H1 (cell line): ENCODE measurements at regions of chr1 and their contacts with region 1.

Region 1: DNA sequence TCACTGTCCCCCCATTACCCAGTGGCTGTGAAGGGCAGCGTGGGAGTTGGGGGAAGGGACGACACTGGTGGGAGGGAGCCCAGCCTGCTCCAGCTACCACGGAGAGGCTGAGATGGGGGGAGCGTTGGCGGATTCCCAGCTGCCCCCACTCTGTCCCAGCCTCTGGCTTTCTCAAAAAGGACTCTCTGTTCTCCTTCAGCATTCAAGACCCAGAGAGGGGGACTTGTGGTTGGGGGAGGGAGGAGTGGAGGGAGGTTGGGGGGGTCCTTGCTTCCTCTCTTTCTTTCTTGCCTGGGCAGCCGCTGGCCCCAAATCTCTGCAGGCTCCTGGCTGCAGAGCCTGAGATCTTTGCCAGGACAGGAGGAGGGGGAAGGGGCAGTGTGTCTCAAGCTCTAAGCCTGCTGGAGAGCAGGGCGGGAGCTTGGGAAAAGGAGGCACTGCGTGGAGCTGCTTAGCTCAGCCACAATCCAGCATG is 2.2 kb downstream of the ATP1A2 start:
- DNase-seq: no peak
- H3K4me3 ChIP-seq: peak overlapping the region in 1 of 4 experiments; percentile 59; a peak in 3 of 8 replicates
- H3K27ac ChIP-seq: no peak overlapping the region
- H3K4me1 ChIP-seq: peaks cover 15 to 44% (median 32%) of the 10 kb centered on the region in 4 experiments
- H3K27me3 ChIP-seq: no peaks in the 10 kb centered on the region; a peak in 1 of 7 replicates
- CTCF ChIP-seq: no peak
- EP300 ChIP-seq: no peak
- POLR2A ChIP-seq: no peak
- RAD21 ChIP-seq: no peak

Region 2: DNA sequence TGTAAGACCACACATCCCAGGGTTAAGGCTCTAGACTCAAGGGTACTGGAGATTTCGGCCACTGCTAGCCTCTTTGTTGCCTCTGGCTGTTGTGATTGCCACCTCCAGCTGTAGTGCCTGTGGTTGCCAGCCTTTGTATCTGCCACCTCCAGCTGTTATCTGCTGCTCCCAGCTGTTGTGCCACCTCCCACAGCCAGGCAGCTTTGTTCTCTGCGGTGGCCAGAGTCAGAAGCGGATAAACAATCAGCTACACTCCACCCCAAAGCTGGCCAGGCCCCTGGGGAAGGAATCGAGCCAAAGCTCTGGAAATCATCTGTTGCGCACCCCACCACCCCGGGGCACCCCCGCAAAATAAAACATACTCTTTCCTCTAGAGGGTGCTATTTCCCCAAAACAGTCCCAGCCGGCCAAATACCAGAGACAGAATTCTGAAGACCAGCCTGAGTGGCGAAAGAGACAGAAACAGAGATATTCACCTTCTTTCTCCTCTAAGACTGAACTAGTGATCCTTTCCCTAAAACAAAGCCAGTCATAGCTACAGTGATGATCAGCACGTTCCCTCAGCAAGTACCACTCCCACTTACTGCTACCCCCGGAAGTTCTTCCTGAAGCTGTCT is 71.1 kb before region 1 on chr1:
- CTCF ChIA-PET with region 1: interaction called, 12 read pairs
- POLR2A ChIA-PET with region 1: no interaction called
- DNase-seq: peak in 1 of 2 experiments; percentile 76
- H3K4me3 ChIP-seq: peak overlapping the region in 1 of 4 experiments; percentile 14; a peak in 2 of 8 replicates
- H3K27ac ChIP-seq: no peak overlapping the region
- H3K4me1 ChIP-seq: peaks cover 10 to 24% (median 16%) of the 10 kb centered on the region in 4 experiments
- H3K27me3 ChIP-seq: no peaks in the 10 kb centered on the region; a peak in 1 of 7 replicates
- CTCF ChIP-seq: peak; percentile 45 to 76 (median 69)
- EP300 ChIP-seq: peak in 1 of 2 experiments; percentile 17; a peak in 2 of 3 replicates
- POLR2A ChIP-seq: no peak
- RAD21 ChIP-seq: peak; percentile 71 to 80

Region 3: GRCh38 chr1:160078512-160079195 is 39.1 kb before region 1 on chr1:
- CTCF ChIA-PET with region 1: interaction called, 13 read pairs
- POLR2A ChIA-PET with region 1: no interaction called
- DNase-seq: peak in 1 of 2 experiments; percentile 90
- H3K4me3 ChIP-seq: no peak overlapping the region
- H3K27ac ChIP-seq: no peak overlapping the region
- H3K4me1 ChIP-seq: no peaks in the 10 kb centered on the region
- H3K27me3 ChIP-seq: peaks cover 0 to 33% (median 20%) of the 10 kb centered on the region in 4 experiments; a peak in 6 of 7 replicates
- CTCF ChIP-seq: peak; percentile 91 to 95 (median 93)
- EP300 ChIP-seq: no peak
- POLR2A ChIP-seq: no peak
- RAD21 ChIP-seq: peak; percentile 75 to 84

Region 4: DNA sequence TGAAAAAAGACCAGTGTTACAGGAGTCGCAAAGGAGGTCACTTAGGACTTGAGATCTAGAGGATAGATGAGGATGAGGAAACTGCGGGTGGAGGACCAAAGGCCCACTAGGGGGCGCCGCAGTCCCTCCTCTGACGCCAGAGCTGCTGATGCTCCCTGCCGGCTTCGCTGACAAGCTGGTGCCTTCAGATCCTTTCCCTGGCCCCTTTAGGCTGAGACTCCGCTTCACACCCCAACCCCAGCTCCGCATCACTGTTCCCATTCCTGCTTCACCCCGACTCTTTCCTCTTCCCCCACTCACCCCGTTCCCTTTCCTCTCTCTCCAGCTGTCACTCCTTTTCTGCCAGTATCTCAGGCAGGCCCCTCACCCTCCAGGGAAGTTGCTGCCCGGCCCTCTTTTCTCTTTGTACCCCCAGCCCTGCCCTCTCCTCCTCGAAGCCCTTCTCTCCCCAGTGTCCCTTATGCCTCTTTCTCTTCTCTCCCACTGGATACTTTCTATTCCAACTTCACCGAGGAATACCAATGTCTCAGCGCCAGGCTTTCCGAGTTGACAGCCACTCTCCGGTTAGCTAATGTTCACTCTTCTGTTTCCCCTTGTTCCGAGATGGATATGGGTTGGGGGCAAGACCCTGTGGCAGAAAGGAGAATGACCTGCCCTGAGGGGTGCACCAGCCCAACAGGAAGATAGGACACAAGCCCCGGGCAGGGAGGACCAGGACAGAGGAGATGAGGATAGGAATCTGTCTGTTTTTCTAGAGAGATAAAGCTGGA is 31.9 kb before region 1 on chr1:
- CTCF ChIA-PET with region 1: interaction called, 12 read pairs
- POLR2A ChIA-PET with region 1: interaction called, 7 read pairs
- DNase-seq: peak; percentile 88 to 96
- H3K4me3 ChIP-seq: no peak overlapping the region
- H3K27ac ChIP-seq: no peak overlapping the region
- H3K4me1 ChIP-seq: peaks cover 0 to 5% (median 3%) of the 10 kb centered on the region in 4 experiments; a peak in 4 of 7 replicates
- H3K27me3 ChIP-seq: peaks cover 0 to 35% (median 27%) of the 10 kb centered on the region in 4 experiments; a peak in 6 of 7 replicates
- CTCF ChIP-seq: peak; percentile 91 to 99 (median 95)
- EP300 ChIP-seq: no peak
- POLR2A ChIP-seq: no peak
- RAD21 ChIP-seq: peak; percentile 83 to 88

Region 5: DNA sequence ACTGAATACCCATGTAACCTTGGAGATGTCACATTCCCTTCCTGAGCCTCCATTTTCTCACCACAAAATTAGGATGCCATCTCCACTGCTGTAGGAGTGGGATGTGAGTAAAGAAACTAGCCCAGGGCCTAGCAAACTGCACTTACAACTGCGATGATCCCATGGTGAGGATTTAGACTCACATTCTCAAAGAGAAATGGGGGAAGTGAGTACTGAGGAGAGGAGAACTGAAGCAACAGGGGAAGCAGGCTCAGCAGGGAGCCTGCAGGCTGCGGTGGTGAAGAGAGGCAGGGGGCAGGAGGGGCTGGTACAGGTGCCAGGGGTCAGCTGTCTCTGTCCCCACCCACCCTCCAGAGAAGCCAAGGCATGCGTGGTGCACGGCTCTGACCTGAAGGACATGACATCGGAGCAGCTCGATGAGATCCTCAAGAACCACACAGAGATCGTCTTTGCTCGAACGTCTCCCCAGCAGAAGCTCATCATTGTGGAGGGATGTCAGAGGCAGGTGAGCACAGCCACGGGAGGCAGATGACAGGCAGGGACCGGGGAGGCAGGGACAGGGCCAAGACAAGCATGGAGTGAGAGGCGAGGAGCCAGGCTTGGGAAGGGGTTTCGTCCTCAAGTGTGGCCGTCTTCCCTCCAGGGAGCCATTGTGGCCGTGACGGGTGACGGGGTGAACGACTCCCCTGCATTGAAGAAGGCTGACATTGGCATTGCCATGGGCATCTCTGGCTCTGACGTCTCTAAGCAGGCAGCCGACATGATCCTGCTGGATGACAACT is 17.2 kb after region 1 on chr1:
- CTCF ChIA-PET with region 1: interaction called, 141 read pairs
- POLR2A ChIA-PET with region 1: interaction called, 10 read pairs
- DNase-seq: no peak
- H3K4me3 ChIP-seq: no peak overlapping the region
- H3K27ac ChIP-seq: no peak overlapping the region
- H3K4me1 ChIP-seq: no peaks in the 10 kb centered on the region
- H3K27me3 ChIP-seq: no peaks in the 10 kb centered on the region
- CTCF ChIP-seq: no peak
- EP300 ChIP-seq: no peak
- POLR2A ChIP-seq: no peak
- RAD21 ChIP-seq: no peak

Region 6: GRCh38 chr1:160169553-160170399 is 52.0 kb after region 1 on chr1:
- CTCF ChIA-PET with region 1: interaction called, 19 read pairs
- POLR2A ChIA-PET with region 1: interaction called, 3 read pairs
- DNase-seq: peak; percentile 79 to 86
- H3K4me3 ChIP-seq: peak overlapping the region in 3 of 4 experiments; percentile 7 to 50 (median 13); a peak in 5 of 8 replicates
- H3K27ac ChIP-seq: peak overlapping the region; percentile 46; the same call in 1 of the 2 replicates
- H3K4me1 ChIP-seq: peaks cover 12 to 28% (median 22%) of the 10 kb centered on the region in 4 experiments; a peak in 6 of 7 replicates
- H3K27me3 ChIP-seq: peaks cover 0 to 2% (median under 1%) of the 10 kb centered on the region in 4 experiments; a peak in 2 of 7 replicates
- CTCF ChIP-seq: no peak
- EP300 ChIP-seq: peak in 1 of 2 experiments; percentile 96; a peak in 2 of 3 replicates
- POLR2A ChIP-seq: no peak
- RAD21 ChIP-seq: no peak

Region 7: DNA sequence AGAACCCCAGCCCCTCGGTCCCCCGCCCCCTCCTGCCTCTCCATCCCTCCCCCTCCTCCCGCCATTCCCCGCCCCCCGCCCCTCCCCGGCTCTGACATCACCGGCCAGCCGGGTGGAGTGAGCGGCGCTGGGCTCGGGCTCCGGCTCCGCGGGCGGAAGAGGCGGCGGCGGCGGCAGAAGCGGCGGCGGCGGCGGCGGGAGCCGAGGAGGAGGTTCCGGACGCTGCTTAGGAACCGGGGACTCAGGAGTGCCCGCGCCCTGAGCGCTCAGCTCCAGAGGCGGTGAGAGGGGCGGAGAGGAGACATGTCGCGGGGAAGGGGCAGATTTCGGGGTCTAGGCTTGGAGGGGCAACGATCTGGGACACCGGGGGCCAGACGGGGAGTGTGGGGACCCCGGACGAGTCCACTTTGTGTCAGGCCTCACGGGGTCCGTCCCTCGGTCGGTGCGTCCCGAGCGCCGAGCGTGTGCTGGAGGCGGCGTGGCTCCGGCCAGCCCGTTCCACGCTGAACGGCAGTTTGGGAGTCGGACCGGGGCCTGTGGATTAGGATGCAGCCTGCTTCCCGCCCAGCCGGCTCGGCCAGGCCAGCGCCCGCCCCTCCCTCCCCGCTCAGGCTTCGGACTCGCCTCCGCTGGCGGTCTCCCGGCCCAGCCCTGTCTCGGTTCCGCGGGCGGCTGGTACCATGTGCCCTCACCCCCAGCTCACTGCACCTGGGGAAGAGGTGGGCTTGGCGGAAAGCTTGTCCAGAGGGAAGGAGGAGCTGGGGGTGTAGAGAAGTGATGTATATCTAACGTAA is 87.7 kb after region 1 on chr1 and contains the start of gene PEA15:
- CTCF ChIA-PET with region 1: interaction called, 11 read pairs
- POLR2A ChIA-PET with region 1: interaction called, 5 read pairs
- DNase-seq: peak in 1 of 2 experiments; percentile 82
- H3K4me3 ChIP-seq: peak within 1 kb of the TSS; percentile 70 to 99 (median 86)
- H3K27ac ChIP-seq: peak within 1 kb of the TSS; percentile 75; the same call in 1 of the 2 replicates
- H3K4me1 ChIP-seq: peaks cover 13 to 35% (median 20%) of the 10 kb centered on the region in 4 experiments
- H3K27me3 ChIP-seq: no peaks in the 10 kb centered on the region
- CTCF ChIP-seq: no peak
- EP300 ChIP-seq: no peak
- POLR2A ChIP-seq: peak in 1 of 2 experiments; percentile 48; a peak in 2 of 3 replicates
- RAD21 ChIP-seq: no peak
- total RNA-seq, gene PEA15: 75.1 and 78.8 TPM in 2 replicates

Region 8: GRCh38 chr1:160362168-160362957 is 244.6 kb after region 1 on chr1:
- CTCF ChIA-PET with region 1: no interaction called
- POLR2A ChIA-PET with region 1: no interaction called
- DNase-seq: no peak
- H3K4me3 ChIP-seq: no peak overlapping the region
- H3K27ac ChIP-seq: peak overlapping the region; percentile 8; the same call in 1 of the 2 replicates
- H3K4me1 ChIP-seq: peaks cover 3 to 8% (median 4%) of the 10 kb centered on the region in 4 experiments; a peak in 6 of 7 replicates
- H3K27me3 ChIP-seq: no peaks in the 10 kb centered on the region
- CTCF ChIP-seq: no peak
- EP300 ChIP-seq: no peak
- POLR2A ChIP-seq: no peak
- RAD21 ChIP-seq: no peak